KBM-7 (cell line): ENCODE measurements at regions of chr12 and their contacts with region 1.

Region 1: DNA sequence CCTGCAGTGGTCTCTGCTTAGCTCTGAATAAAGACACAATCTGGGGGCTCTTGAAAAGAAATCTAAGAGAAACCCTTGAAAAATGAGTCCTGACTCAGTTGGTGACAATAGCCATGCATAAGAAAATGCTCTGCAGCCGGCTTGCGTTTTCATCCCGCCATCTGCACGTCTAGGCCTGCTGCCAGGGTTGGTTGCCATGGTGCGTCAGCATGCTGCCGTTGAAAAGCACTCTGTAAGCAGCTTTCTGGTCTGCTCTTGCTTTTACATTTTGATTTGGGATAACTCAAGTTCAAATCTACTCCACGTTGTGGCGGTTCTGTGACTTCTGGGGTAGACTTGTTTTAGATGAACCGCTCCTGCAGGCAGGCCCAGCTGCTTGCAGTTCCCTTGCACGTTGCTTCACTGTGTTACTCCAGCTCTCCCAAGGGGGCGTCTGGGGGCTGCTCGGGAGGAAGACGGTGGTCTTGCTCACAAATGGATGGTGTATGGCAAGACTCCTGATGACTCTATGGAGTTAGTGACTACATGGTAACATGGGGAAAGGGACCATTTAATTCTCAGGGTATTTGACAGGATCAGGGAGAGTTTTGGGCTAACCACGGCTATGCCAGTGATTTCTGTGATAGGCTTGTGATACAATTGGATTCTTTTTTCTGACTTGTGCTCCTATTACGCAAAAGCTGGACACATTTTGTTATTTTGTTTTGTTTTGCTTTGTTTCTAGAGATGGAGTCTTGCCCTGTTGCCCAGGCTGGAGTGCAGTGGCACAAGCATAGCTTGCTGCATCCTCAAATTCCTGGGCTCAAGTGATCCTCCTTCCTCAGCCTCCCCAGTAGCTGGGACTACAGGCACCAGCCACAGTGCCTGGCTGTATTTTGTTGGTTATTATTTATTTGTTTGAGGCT is 15.8 kb downstream of the WNT5B start:
- DNase-seq: no peak

Region 2: GRCh38 chr12:1779783-1780182 is 135.0 kb after region 1 on chr12:
- in situ Hi-C with region 1: loop called (anchors 10 kb)
- DNase-seq: no peak